PC-9 (cell line): ENCODE measurements at regions of chr6 and their contacts with region 1.

Region 1: DNA sequence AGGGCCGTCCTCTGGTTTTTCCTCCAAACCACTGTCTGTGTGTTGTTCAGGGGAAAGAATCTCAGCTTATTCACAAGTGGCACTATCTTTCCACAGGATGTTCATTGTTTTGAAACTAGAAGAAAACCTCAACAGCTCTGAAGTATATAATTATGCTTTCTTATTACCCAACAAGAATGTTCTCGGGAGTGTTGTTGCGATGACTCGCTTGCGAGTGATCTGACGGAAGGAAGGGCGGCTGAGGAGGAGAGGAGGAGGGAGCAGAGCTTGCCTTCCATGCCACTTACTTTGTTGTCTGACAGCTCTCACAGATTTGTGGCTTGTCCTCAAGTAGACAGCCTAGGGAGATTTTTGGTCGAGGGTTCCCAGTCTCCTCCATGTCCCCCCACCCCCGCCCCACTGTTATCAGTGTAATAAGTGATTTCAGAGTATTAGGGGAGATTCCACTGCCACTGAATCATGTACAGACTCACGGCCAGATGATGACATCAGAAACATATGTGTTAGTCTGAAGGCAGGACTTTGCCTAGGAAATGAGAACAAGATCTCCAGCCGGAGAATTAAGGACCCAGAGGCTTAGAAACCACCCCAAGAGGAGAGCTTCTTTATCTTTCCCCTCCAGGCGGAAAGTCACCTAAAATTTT is 80.7 kb upstream of the CCN6 start:
- DNase-seq: peak; percentile 29 to 77
- H3K4me3 ChIP-seq: peak overlapping the region; percentile 34; the same call in 1 of the 2 replicates
- H3K27ac ChIP-seq: peak overlapping the region; percentile 64
- H3K4me1 ChIP-seq: peaks cover 23% of the 10 kb centered on the region
- H3K27me3 ChIP-seq: no peaks in the 10 kb centered on the region
- CTCF ChIP-seq: no peak

Region 2: GRCh38 chr6:110971468-110971867 is 1001.8 kb before region 1 on chr6:
- CTCF ChIA-PET with region 1: interaction called, 19 read pairs
- POLR2A ChIA-PET with region 1: no interaction called
- intact Hi-C with region 1: no loop called
- DNase-seq: no peak
- H3K4me3 ChIP-seq: no peak overlapping the region
- H3K27ac ChIP-seq: no peak overlapping the region
- H3K4me1 ChIP-seq: no peaks in the 10 kb centered on the region
- H3K27me3 ChIP-seq: no peaks in the 10 kb centered on the region
- CTCF ChIP-seq: no peak

Region 3: DNA sequence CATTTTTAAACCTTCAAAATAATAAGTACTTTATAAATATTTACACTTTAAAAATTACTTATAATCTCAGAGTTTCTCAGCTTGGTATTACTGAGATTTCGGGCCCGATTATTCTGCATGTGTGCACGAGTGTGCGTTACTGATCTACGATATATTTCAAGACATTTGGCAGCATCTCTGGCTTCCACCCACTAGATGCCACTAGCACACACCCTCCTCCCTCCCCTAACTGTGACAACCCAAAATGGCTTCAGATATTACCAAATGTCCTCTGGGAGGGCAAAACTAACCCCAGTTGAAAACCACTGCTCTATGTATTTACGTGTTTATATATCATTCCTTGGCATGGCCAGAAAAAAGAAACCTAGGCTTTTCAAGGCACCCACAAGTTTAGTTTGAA is 195.9 kb before region 1 on chr6:
- CTCF ChIA-PET with region 1: no interaction called
- POLR2A ChIA-PET with region 1: no interaction called
- intact Hi-C with region 1: no loop called
- DNase-seq: peak in 1 of 2 experiments; percentile 28
- H3K4me3 ChIP-seq: no peak overlapping the region
- H3K27ac ChIP-seq: no peak overlapping the region
- H3K4me1 ChIP-seq: peaks cover 11% of the 10 kb centered on the region
- H3K27me3 ChIP-seq: no peaks in the 10 kb centered on the region
- CTCF ChIP-seq: no peak

Region 4: GRCh38 chr6:111985202-111985731 is 12.0 kb after region 1 on chr6:
- CTCF ChIA-PET with region 1: no interaction called
- POLR2A ChIA-PET with region 1: no interaction called
- intact Hi-C with region 1: loop called (anchors 1 kb)
- DNase-seq: peak; percentile 65 to 100
- H3K4me3 ChIP-seq: peak overlapping the region; percentile 24; the same call in 1 of the 2 replicates
- H3K27ac ChIP-seq: peak overlapping the region; percentile 85
- H3K4me1 ChIP-seq: peaks cover 52% of the 10 kb centered on the region
- H3K27me3 ChIP-seq: no peaks in the 10 kb centered on the region
- CTCF ChIP-seq: no peak